Prostate gland (tissue), 2 donors: ENCODE measurements at regions of chr4 and their contacts with region 1.

Region 1: GRCh38 chr4:147220833-147221232 is 260.1 kb upstream of the EDNRA start:
- DNase-seq: no peak
- H3K4me3 ChIP-seq: no peak overlapping the region
- H3K27ac ChIP-seq: no peak overlapping the region
- H3K4me1 ChIP-seq: no peaks in the 10 kb centered on the region
- H3K27me3 ChIP-seq: no peaks in the 10 kb centered on the region
- CTCF ChIP-seq: no peak
- POLR2A ChIP-seq: no peak

Region 2: DNA sequence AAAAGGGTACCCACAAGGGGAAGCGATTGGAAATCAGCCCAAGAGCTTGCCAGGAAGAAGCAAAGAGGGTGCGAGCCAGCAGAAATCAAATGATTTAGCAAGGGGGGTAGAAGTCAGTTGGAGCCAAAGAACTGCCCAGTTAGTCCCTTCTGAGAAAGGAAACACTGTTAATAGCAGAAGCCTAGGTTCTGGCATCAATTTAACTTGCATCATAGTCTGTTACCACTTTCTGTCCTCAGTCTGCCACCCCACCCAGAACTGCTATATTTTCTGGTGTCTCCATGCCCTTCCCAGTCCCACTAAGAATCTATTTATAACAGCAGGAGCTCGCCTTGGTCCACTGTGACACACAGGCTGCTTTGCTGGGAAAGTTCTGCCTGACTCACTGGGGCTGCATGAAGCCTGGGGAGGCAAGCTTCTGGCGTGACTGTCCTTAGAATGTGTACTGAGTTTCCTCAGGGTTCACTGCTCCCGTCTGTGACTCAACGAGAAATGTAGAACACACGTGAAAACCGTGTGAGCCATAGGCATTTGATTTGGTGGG is 117.4 kb before region 1 on chr4:
- intact Hi-C with region 1: no loop called
- DNase-seq: no peak
- H3K4me3 ChIP-seq: no peak overlapping the region
- H3K27ac ChIP-seq: no peak overlapping the region
- H3K4me1 ChIP-seq: no peaks in the 10 kb centered on the region
- H3K27me3 ChIP-seq: no peaks in the 10 kb centered on the region
- CTCF ChIP-seq: no peak
- POLR2A ChIP-seq: no peak

Region 3: DNA sequence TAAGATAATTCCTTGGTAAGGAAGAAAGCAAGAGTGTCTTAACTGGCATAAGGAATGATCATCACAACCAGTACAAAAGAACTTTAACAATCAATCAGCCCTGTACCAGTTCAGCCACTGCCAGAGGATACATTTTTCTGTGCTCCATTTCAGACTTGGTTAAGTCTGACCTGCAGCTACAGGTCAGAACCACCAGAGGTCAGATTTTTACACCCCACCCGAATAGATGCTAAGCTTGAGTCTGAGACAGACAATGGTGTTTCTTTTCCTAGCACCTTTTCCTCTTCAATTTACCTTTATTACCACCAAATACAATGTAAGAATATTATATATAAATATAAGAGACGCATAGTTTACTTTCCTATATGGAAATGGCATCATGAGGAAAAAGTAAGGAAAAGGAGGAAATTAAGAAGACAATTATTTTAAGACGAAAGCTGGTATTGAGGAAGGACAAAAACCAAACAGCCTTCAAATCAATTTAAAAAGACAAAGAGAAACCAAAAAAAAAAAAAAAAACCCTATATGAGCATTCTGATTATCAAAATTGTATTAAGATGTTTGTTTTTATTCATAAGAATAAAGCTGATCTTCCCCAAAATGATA is 59.8 kb before region 1 on chr4:
- intact Hi-C with region 1: no loop called
- DNase-seq: no peak
- H3K4me3 ChIP-seq: no peak overlapping the region
- H3K27ac ChIP-seq: no peak overlapping the region
- H3K4me1 ChIP-seq: no peaks in the 10 kb centered on the region
- H3K27me3 ChIP-seq: no peaks in the 10 kb centered on the region
- CTCF ChIP-seq: peak in 3 of 4 experiments; percentile 46 to 62 (median 57)
- POLR2A ChIP-seq: no peak

Region 4: GRCh38 chr4:147772459-147772969 is 551.7 kb after region 1 on chr4:
- intact Hi-C with region 1: loop called (anchors 10 kb)
- DNase-seq: no peak
- H3K4me3 ChIP-seq: no peak overlapping the region
- H3K27ac ChIP-seq: no peak overlapping the region
- H3K4me1 ChIP-seq: peaks cover 5% of the 10 kb centered on the region
- H3K27me3 ChIP-seq: peaks cover 3% of the 10 kb centered on the region
- CTCF ChIP-seq: no peak
- POLR2A ChIP-seq: no peak